Cardiac septum (tissue), 1 donor: ENCODE measurements at regions of chr17 and their contacts with region 1.

Region 1: GRCh38 chr17:75034236-75034908 is 12.4 kb downstream of the ATP5PD start:
- DNase-seq: peak; percentile 88

Region 2: GRCh38 chr17:74961657-74962490 is 72.5 kb before region 1 on chr17:
- intact Hi-C with region 1: loop called (anchors 5 kb)
- DNase-seq: peak; percentile 90

Region 3: DNA sequence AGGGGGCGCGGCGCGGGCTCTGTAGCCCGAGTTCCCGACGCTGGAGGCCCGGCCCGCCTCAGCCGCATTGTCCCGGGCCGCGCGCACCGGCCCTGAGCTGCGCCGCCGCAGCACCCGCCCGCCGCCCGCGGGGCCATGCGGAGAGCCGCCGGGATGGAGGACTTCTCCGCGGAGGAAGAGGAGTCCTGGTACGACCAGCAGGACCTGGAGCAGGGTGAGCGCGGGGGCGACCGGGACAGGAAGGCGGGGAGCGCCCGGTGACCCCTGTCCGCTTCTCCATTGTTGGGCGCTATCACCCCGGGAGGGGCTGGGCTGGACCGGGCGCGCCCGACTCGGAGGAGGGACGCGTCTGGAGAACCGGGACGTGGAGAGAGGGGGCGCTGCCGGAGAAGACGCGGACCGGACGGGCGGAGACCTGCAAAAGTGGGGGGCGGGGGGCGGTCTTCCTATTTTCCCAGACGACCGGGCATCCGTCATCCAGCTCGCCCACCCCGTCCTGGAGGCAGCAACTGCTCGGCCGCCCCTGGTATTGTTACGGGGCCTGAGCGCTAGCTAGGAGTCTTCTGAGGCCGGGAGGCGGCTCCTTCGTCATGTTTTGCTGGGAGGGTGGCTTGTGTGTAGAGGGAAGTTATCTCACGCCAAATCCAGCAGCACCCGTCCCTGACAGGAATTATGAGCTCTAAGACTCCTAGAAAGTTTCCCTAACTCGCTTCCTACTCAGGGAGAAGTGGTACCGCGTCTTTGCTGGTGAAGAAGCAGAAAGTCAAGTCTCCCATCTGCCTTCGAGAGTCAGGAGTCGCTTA is 46.3 kb before region 1 on chr17:
- intact Hi-C with region 1: loop called (anchors 2 kb)
- DNase-seq: peak; percentile 91

Region 4: DNA sequence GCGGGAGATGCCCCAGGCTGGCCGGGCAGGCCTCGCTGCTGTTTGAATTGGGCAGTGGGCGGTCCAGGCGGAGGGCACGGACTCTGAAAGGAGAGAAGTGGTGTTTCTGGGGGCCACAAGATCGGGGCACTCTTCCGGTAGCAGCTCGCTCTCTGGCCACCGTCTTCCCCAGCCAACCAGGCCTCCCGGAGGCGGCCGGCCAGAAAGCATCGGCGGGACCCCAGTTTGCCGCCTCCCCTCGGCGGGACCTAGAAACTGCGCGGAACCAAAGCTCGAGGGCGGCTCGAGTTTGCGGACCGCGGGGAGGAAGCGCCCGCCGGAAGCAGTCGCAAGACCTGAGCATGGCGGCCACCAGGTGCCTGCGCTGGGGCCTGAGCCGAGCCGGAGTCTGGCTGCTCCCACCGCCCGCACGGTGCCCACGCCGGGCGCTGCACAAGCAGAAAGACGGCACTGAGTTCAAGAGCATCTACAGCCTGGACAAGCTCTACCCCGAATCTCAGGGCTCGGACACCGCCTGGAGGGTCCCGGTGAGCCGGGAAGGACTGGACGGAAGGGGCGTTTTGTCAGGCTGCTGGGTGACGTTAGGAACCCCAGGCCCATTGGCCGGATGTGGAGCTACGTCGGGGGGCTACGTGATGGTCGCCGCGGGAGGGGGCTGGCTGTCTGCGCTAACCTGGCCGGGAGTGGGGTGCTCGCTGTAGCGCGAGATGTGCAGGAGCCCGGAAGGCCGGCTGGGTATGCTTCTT is 21.9 kb before region 1 on chr17 and contains the start of gene MRPL58:
- intact Hi-C with region 1: loop called (anchors 2 kb)
- DNase-seq: peak; percentile 91
- total RNA-seq, gene MRPL58: 39.3 TPM